ENCODE measurements at regions of chr3 and their contacts with region 1.

Region 1: DNA sequence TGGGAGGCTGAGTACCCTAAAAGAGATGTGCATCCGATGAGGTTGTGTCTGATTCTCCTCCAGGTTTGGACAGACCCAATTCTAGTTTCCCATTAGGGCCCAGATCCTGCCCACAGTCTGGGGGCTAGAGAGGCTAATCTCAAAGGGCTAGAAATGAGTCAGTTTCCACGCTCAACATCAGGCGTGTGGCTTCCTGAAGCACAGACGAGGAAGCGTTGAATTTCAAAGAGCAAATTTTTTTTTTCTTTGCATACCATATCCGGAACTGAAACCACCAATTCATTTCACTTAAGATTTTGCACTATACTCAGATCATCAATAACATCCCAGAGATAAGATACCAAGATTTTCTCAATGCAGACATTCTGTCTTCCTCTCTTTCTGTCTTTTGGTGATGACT is 173.8 kb upstream of the BCL6 start:
- DNase-seq: no peak
- H3K4me3 ChIP-seq: no peak overlapping the region
- H3K27ac ChIP-seq: no peak overlapping the region
- H3K4me1 ChIP-seq: peaks cover 94% of the 10 kb centered on the region
- H3K27me3 ChIP-seq: no peaks in the 10 kb centered on the region
- CTCF ChIP-seq: no peak

Region 2: GRCh38 chr3:189477614-189478013 is 1558.6 kb after region 1 on chr3:
- CTCF ChIA-PET with region 1: no interaction called
- POLR2A ChIA-PET with region 1: interaction called, 17 read pairs
- intact Hi-C with region 1: no loop called
- DNase-seq: no peak
- H3K4me3 ChIP-seq: no peak overlapping the region
- H3K27ac ChIP-seq: no peak overlapping the region
- H3K4me1 ChIP-seq: no peaks in the 10 kb centered on the region
- H3K27me3 ChIP-seq: no peaks in the 10 kb centered on the region
- CTCF ChIP-seq: no peak